ENCODE measurements at regions of chr15 and their contacts with region 1.

Region 1: GRCh38 chr15:39976291-39977274 is 42.7 kb downstream of the EIF2AK4 start:
- DNase-seq: peak; percentile 53 to 87 (median 81)
- H3K4me3 ChIP-seq: peak overlapping the region; percentile 36 to 86 (median 68)
- H3K27ac ChIP-seq: peak overlapping the region; percentile 60 to 97 (median 90)
- H3K27me3 ChIP-seq: no peaks in the 10 kb centered on the region
- CTCF ChIP-seq: peak; percentile 46 to 90 (median 70)

Region 2: GRCh38 chr15:39782441-39783138 is 194.0 kb before region 1 on chr15 and contains the start of gene FSIP1:
- intact Hi-C with region 1: loop called (anchors 2 to 5 kb)
- DNase-seq: peak; percentile 92 to 97 (median 94)
- H3K4me3 ChIP-seq: peak within 1 kb of the TSS; percentile 59 to 95 (median 81)
- H3K27ac ChIP-seq: peak within 1 kb of the TSS; percentile 3 to 94 (median 85)
- H3K27me3 ChIP-seq: no peaks in the 10 kb centered on the region
- CTCF ChIP-seq: peak in 23 of 56 donors; percentile 1 to 50 (median 16)
- total RNA-seq, gene FSIP1: 3.4 to 15.4 (median 8.8) TPM

Region 3: DNA sequence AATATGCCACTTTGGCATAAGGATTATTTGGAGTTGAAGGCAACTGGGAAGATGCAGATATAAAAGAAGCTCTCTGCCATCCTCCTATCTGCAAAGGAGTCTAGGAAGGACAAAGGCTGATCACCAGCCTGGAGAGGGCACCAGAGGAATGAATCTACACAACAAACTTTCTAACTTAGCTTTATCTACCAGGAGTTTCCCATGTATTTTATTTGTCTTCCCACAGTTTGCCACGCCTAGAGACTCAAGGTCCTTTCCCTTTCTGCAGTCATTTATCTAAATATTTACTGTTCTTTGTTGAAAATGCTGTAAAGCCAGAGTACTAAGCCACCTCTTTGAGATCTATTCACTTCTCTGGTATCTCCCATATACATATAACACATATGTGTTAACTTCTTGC is 88.8 kb before region 1 on chr15:
- intact Hi-C with region 1: loop called in 1 of 2 experiments (anchors 5 kb)
- DNase-seq: peak in 2 of 10 donors; percentile 16 to 33
- H3K4me3 ChIP-seq: no peak overlapping the region
- H3K27ac ChIP-seq: no peak overlapping the region
- H3K27me3 ChIP-seq: no peaks in the 10 kb centered on the region
- CTCF ChIP-seq: peak in 45 of 56 donors; percentile 14 to 65 (median 37)

Region 4: GRCh38 chr15:39920510-39921273 is 55.9 kb before region 1 on chr15:
- intact Hi-C with region 1: loop called in 1 of 2 experiments (anchors 5 kb)
- DNase-seq: peak; percentile 64 to 90 (median 77)
- H3K4me3 ChIP-seq: peak overlapping the region; percentile 46 to 92 (median 82)
- H3K27ac ChIP-seq: peak overlapping the region; percentile 48 to 95 (median 84)
- H3K27me3 ChIP-seq: no peaks in the 10 kb centered on the region
- CTCF ChIP-seq: peak in 38 of 56 donors; percentile 7 to 55 (median 28)

Region 5: DNA sequence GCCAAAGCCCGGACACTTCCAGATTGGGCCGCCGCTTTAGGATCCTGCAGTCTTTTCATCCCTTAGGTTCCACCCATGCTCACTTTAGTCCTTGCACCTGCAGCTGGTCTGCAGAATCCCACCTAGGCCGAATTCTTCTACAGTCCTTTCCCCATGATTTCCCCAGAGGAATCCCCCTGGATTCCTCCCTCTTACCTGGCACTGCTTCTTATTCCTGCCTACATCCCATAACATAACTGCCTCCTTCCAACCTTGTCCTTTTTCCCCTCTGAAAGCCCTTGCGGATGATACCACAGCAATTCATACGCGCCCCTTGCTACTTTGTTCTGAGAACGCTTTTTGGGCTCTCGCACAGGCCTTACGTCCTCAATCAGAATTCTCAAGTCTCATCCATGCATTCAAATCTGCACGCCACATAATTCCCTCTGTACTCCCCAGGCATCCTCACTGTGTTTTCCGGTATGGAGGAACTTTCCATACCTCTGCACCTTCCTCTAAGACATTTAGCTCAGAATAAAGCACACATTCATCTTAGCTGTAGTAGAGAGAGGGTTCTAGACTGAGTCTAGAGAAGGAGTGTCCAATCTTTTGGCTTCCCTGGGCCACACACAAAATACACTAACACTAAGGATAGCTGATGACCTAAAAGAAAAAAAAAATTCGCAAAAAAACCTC is 42.0 kb before region 1 on chr15:
- intact Hi-C with region 1: loop called in 1 of 2 experiments (anchors 5 kb)
- DNase-seq: peak in 1 of 10 donors; percentile 61
- H3K4me3 ChIP-seq: peak overlapping the region; percentile 48 to 94 (median 84)
- H3K27ac ChIP-seq: peak overlapping the region in 58 of 59 donors; percentile 29 to 94 (median 84)
- H3K27me3 ChIP-seq: no peaks in the 10 kb centered on the region
- CTCF ChIP-seq: no peak

Region 6: DNA sequence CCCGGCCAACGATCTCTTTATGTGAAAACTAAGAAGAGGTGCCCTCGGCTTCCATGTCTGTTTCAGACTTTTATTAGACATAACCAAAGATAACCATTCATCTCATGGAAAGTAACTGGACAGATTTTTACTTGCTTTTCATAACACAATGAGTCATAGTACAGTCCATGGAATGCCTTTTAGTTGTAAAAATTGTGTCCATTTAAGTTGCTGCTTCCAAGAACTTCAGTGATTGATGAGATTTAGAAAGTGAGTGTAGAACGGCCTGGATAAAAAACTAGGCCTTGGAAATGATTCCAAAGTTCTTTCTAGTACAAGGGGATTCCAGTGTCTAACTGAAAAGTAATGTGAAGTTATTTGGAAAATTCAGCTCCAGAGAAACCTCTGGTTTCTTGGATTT is 31.9 kb before region 1 on chr15:
- intact Hi-C with region 1: no loop called
- DNase-seq: no peak
- H3K4me3 ChIP-seq: no peak overlapping the region
- H3K27ac ChIP-seq: no peak overlapping the region
- H3K27me3 ChIP-seq: no peaks in the 10 kb centered on the region
- CTCF ChIP-seq: no peak